Spleen (tissue), 13 donors: ENCODE measurements at regions of chr1 and their contacts with region 1.

Region 1: DNA sequence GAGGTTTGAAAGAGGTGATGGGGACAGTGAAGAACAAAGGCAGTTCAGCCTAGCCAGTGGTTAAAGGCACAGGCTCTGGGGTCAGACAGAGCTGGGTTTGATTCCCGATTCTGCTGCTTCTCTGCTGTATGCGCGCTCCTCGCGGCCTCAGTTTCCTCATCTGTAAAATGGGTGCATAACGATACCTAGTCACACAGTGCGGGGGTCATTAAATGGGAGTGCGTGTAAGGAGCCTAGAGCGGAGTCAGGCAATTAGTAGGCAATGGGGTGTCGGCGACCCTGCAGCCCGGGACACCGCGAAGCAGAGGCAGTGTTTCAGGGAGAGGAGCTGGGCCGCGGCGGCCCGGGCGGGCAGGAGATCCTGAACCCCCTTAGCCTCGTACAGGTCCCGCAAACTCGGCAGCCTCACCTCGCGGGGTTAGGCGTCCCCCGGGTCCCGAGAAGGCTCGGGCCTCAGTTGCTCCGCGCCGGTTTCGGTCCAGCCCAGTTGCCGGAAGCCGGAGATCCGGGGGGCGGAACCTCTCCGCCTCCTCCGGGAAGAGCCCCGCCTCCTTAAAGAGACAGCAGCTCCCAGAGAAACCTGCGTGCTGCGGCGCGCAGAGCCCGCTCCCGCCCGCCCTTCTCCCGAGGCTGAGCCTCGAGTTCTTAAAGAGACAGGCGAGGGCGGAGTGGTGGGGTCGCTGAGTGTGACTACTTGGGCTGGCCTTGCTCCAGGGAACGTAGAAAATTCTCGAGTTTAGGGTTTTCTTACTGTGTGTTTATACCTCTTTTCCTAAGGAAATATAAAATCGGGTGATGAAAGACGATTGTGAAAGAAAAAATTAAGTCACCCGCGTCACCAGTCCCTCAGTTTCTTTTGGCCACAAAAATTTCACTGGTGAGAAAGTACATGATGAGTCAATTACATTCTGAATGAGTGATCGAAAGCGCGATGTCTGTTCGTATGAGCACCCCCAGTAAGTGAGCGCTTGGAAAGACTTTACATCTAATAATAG is at the start of gene YIPF1:
- DNase-seq: peak; percentile 98
- H3K4me3 ChIP-seq: peak within 1 kb of the TSS; percentile 85 to 99 (median 92)
- H3K27ac ChIP-seq: peak within 1 kb of the TSS; percentile 58 to 91 (median 86)
- H3K4me1 ChIP-seq: peaks cover 13 to 67% (median 27%) of the 10 kb centered on the region in 6 donors
- H3K27me3 ChIP-seq: no peaks in the 10 kb centered on the region
- CTCF ChIP-seq: peak in 3 of 11 experiments; percentile 10 to 45 (median 25)
- POLR2A ChIP-seq: no peak
- total RNA-seq, gene YIPF1: 19.5 to 39.7 (median 23.9) TPM

Region 2: GRCh38 chr1:53470155-53470554 is 419.4 kb before region 1 on chr1:
- intact Hi-C with region 1: no loop called
- DNase-seq: peak; percentile 75
- H3K4me3 ChIP-seq: no peak overlapping the region
- H3K27ac ChIP-seq: no peak overlapping the region
- H3K4me1 ChIP-seq: peaks cover 0 to 9% (median 0%) of the 10 kb centered on the region in 6 donors
- H3K27me3 ChIP-seq: no peaks in the 10 kb centered on the region
- CTCF ChIP-seq: peak in 10 of 11 experiments; percentile 10 to 68 (median 48)
- POLR2A ChIP-seq: no peak

Region 3: DNA sequence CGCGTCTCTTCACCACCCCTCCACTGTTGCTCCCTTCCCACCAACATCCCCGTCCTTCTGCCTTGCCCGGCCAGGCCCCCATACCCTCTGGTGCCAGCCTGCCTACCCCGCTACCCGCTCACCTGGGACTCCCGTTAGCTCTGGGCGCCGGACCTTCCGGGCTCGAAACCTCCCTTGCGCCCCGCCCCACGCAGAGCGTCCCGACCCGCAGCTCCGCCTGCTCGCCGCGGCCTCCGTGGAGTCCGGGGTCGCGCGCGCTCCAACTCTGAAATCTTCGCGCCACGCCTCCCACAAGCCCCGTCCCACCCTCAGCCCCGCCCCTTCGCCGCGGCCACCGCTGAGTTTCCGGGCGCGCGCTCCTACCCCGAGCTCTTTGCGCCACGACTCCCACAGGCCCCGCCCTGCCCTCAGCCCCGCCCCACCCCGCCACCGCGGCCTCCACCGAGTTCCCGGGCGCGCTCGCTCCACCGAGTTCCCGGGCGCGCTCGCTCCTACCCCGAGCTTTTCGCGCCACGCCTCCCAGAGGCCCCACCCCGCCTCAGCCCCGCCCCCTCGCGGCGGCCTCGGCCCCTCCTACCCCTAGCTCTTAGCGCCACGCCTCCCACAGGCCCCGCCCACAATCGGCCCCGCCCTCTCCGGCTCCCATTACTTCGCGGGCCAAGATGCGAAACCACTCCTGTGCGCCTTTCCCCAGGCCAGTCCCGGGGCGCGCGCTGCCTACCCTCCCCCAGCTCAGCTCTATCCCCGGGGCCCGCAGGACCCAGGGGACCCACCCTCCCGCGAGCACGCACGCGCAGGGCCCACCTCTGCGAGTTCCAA is 56.0 kb after region 1 on chr1 and contains the start of gene IFT25:
- intact Hi-C with region 1: loop called (anchors 5 kb)
- DNase-seq: peak; percentile 100
- H3K4me3 ChIP-seq: peak within 1 kb of the TSS; percentile 67 to 90 (median 82)
- H3K27ac ChIP-seq: peak within 1 kb of the TSS; percentile 91 to 96 (median 92)
- H3K4me1 ChIP-seq: peaks cover 18 to 61% (median 35%) of the 10 kb centered on the region in 6 donors
- H3K27me3 ChIP-seq: no peaks in the 10 kb centered on the region
- CTCF ChIP-seq: peak in 3 of 11 experiments; percentile 8 to 44 (median 35)
- POLR2A ChIP-seq: peak in 2 of 3 donors; percentile 30 to 66
- total RNA-seq, gene IFT25: 23.7 to 38.1 (median 27.6) TPM